Head of caudate nucleus (tissue), 42 donors: ENCODE measurements at regions of chr1 and their contacts with region 1.

Region 1: GRCh38 chr1:26602378-26602959 is 72.9 kb downstream of the RPS6KA1 start:
- DNase-seq: peak in 20 of 42 donors; percentile 11 to 83 (median 53)

Region 2: GRCh38 chr1:26500488-26501175 is 101.8 kb before region 1 on chr1:
- intact Hi-C with region 1: loop called (anchors 10 kb)
- DNase-seq: peak; percentile 67 to 97 (median 92)

Region 3: DNA sequence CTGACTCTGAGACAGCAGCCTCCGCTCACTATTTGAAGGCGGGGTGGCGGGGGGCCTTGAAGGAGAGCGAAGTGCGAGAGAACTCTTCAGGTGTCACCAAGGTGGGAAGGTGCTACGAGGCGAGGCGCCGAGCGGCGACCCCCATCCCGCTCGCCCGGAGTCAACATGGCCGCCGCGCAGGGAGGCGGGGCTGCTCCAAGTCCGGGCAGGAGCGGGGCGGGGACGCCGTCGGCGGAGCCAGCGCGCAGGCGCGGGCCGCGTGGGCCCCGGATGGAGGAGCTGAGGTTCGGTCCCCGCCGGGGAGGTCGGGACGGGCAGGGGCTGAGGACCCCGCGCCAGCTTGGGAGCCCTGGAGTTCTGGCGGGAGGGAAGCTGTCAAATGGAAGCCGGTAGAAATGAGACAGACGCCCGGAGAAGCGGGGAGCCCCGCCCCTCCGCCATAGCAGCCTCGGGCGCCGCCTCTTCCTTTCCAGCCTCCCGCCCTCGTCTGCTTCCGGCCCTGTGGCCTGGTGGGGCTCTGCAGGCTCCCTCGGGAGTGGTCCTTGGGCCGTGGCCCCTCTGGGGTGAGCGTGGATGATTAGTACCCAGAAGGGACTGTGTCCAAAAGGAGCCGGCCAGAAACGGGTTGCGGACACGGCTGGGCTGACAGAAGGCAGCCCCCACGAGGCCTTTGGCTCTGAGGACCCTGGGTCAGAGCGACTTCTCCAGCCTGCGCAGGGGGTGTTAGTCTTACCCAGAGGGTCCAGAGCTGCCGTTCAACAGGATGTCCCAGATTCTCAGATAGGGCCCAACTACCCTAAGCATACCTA is 185.4 kb after region 1 on chr1 and contains the start of gene PIGV:
- intact Hi-C with region 1: loop called (anchors 2 kb)
- DNase-seq: peak; percentile 68 to 95 (median 90)

Region 4: GRCh38 chr1:26874896-26875295 is 272.4 kb after region 1 on chr1:
- intact Hi-C with region 1: loop called (anchors 10 kb)
- DNase-seq: no peak